RWPE1 (cell line): ENCODE measurements at regions of chr5 and their contacts with region 1.

Region 1: GRCh38 chr5:57338068-57338892 is 144.3 kb downstream of the ACTBL2 start:
- DNase-seq: no peak
- H3K27ac ChIP-seq: no peak overlapping the region
- CTCF ChIP-seq: no peak

Region 2: DNA sequence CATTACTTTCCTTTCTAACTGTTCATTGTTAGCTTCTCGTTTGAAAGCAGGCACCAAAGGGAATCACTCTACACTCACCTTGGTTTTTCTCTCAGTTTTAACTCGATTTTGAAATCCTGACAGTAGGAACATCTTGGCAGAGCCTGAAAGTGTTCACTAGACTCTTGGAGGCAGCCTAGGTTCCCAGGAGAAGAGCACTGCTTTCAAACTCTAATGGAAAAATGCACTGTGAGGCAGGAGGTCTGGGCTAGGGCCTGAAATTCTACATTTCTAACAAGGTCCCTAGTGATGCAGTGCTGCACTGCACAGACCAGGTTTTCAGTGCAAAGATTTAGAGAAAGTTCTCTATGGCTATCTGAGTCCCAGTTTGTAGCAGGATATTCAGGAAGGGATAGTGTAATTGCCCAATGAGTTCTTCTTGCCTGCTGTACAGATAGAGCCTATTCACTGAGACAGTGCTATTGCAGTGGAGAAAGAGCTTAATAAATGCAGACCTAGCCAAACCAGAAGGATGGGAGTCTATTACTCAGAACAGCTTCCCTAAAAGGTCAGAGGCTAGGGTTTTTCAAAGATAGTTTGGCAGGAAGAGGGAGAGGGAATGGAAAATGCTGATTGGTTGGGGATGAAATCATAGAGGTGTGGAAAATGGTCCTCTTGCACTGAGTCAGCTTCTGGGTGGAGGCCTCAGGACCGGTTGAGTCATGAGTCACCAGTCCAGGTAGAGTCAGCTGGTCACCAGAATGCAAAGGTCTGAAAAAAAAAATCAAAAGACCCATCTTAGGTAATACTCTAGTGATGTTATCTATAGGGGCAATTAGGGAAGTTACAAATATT is 10.5 kb before region 1 on chr5:
- CTCF ChIA-PET with region 1: interaction called, 10 read pairs
- POLR2A ChIA-PET with region 1: no interaction called
- DNase-seq: peak; percentile 90
- H3K27ac ChIP-seq: no peak overlapping the region
- CTCF ChIP-seq: no peak

Region 3: DNA sequence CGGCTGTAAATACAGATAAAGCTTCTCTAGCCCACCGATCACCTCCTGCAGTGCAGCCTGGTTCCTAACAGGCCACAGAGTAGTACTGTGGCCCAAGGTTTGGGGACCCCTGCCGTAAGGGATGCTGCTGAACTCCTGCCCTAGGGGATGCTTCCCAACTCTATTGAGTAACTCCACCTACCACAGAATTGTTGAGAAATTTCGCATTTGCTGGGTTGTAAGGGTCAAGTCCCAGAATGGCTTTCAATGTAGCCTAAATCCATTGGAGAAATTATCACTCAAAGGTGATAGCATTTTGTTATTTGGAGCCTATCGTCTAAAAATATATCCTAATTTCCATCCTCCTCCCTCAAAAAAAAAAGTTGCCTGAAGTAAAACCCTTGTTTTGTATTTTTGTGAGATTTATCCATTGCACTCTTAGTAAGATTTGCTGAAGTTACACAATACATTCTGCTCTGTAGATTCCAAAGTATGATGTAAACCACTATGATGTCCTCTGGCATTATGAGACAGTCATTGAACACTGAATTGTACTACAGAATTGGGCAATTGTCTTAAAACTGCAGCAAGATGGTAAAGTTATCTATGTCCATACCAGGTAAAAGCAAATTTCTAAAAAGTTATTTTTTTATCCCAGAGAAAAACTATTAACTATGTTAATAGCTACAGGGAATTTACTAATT is 130.3 kb after region 1 on chr5:
- CTCF ChIA-PET with region 1: no interaction called
- POLR2A ChIA-PET with region 1: no interaction called
- DNase-seq: peak; percentile 55
- H3K27ac ChIP-seq: no peak overlapping the region
- CTCF ChIP-seq: no peak